Activated B cell treated with CpG ODN at 0.5 μM for 24 hours (primary cell): ENCODE measurements at regions of chr3 and their contacts with region 1.

Region 1: GRCh38 chr3:128680602-128681368 is 30.2 kb upstream of the RPN1 start:
- DNase-seq: peak; percentile 93
- ATAC-seq: peak; percentile 96
- H3K4me3 Mint-ChIP-seq: peak overlapping the region; percentile 92
- H3K27ac Mint-ChIP-seq: peak overlapping the region; percentile 94
- H3K4me1 Mint-ChIP-seq: peaks cover 34% of the 10 kb centered on the region
- H3K27me3 Mint-ChIP-seq: no peaks in the 10 kb centered on the region
- CTCF ChIP-seq: peak; percentile 62

Region 2: DNA sequence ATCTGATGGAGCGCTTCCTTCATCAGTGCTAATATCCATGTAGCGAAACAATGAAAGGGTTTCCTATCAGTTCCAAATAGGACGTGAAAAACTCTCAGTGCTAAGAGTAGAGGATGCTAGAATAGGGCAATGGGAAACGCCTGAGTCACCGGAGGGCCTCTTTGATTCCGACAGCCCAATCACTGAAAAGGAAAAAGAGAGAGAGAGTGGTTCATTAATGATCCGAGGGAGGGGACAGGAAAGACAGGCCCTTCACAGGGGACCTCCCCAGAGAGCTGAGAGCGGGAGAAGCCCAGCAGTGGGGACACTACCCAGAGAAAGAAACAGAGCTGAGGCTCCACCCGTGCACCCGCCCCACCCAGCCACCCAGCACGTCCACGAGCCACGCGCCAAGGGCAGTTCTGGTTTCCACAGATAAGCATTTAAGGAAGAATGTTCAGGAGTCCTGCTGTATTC is 107.0 kb before region 1 on chr3:
- CTCF ChIA-PET with region 1: no interaction called
- POLR2A ChIA-PET with region 1: no interaction called
- intact Hi-C with region 1: no loop called
- DNase-seq: no peak
- ATAC-seq: no peak
- H3K4me3 Mint-ChIP-seq: no peak overlapping the region
- H3K27ac Mint-ChIP-seq: no peak overlapping the region
- H3K4me1 Mint-ChIP-seq: no peaks in the 10 kb centered on the region
- H3K27me3 Mint-ChIP-seq: peaks cover 16% of the 10 kb centered on the region
- CTCF ChIP-seq: no peak

Region 3: GRCh38 chr3:128650096-128651050 is 30.4 kb before region 1 on chr3 and contains the start of gene RPN1:
- CTCF ChIA-PET with region 1: interaction called, 8 read pairs
- POLR2A ChIA-PET with region 1: interaction called, 62 read pairs
- intact Hi-C with region 1: loop called (anchors 1 kb)
- DNase-seq: peak; percentile 90
- ATAC-seq: peak; percentile 97
- H3K4me3 Mint-ChIP-seq: peak within 1 kb of the TSS; percentile 89
- H3K27ac Mint-ChIP-seq: peak within 1 kb of the TSS; percentile 86
- H3K4me1 Mint-ChIP-seq: peaks cover 41% of the 10 kb centered on the region
- H3K27me3 Mint-ChIP-seq: no peaks in the 10 kb centered on the region
- CTCF ChIP-seq: no peak
- total RNA-seq, gene RPN1: 93.4 and 95.2 TPM in 2 replicates

Region 4: GRCh38 chr3:128725932-128726690 is 45.3 kb after region 1 on chr3 and contains the start of gene RAB7A:
- CTCF ChIA-PET with region 1: interaction called, 21 read pairs
- POLR2A ChIA-PET with region 1: interaction called, 42 read pairs
- intact Hi-C with region 1: loop called (anchors 1 kb)
- DNase-seq: peak; percentile 93
- ATAC-seq: peak; percentile 94
- H3K4me3 Mint-ChIP-seq: peak within 1 kb of the TSS; percentile 93
- H3K27ac Mint-ChIP-seq: peak within 1 kb of the TSS; percentile 91
- H3K4me1 Mint-ChIP-seq: peaks cover 61% of the 10 kb centered on the region
- H3K27me3 Mint-ChIP-seq: peaks cover 7% of the 10 kb centered on the region
- CTCF ChIP-seq: no peak
- total RNA-seq, gene RAB7A: 169 and 190 TPM in 2 replicates

Region 5: DNA sequence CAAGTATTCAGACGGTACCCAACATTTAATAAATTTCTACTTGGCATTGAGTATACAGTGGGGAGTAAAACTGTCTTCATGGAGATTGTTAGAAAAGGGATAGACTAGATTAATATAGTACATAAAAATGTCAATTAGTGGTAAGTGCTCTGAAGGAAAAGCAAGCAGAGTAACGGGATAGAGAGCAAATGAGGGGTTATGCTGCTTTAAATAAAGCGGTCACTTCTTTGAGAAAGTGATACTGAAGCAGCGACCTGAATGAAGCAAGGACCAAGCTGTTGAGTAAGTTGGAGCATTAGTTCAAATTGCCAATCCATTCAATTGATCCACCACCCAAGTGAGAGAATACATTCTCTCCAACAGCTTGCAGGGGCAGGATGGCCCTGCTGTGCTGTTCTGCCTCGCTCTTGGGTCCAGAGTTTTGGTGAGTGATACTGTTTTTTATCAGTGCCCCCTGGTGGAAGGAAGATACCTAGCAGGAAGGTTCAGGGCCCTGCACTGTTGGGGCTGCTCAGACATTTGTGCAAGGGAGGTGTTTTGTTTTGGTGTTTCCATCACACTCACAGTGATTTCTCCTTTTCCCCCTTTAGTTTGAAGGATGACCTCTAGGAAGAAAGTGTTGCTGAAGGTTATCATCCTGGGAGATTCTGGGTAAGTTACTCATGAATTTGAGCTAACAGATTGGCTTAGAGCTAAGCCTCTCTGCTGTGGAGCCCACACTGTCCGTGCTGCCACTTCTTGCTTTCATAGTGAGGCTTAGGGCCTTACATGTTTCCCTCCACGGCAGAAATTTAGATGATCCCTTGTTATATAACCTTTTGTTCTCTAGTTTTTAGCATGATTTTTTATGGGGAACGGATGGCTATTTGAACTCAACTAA is 114.2 kb after region 1 on chr3:
- CTCF ChIA-PET with region 1: interaction called, 79 read pairs
- POLR2A ChIA-PET with region 1: interaction called, 17 read pairs
- intact Hi-C with region 1: loop called (anchors 1 kb)
- DNase-seq: no peak
- ATAC-seq: peak; percentile 100
- H3K4me3 Mint-ChIP-seq: no peak overlapping the region
- H3K27ac Mint-ChIP-seq: peak overlapping the region; percentile 30
- H3K4me1 Mint-ChIP-seq: peaks cover 50% of the 10 kb centered on the region
- H3K27me3 Mint-ChIP-seq: no peaks in the 10 kb centered on the region
- CTCF ChIP-seq: no peak

Region 6: GRCh38 chr3:128845778-128846485 is 165.1 kb after region 1 on chr3:
- CTCF ChIA-PET with region 1: interaction called, 15 read pairs
- POLR2A ChIA-PET with region 1: interaction called, 13 read pairs
- intact Hi-C with region 1: loop called (anchors 1 kb)
- DNase-seq: peak; percentile 72
- ATAC-seq: peak; percentile 87
- H3K4me3 Mint-ChIP-seq: peak overlapping the region; percentile 88
- H3K27ac Mint-ChIP-seq: peak overlapping the region; percentile 36
- H3K4me1 Mint-ChIP-seq: peaks cover 10% of the 10 kb centered on the region
- H3K27me3 Mint-ChIP-seq: no peaks in the 10 kb centered on the region
- CTCF ChIP-seq: no peak

Region 7: DNA sequence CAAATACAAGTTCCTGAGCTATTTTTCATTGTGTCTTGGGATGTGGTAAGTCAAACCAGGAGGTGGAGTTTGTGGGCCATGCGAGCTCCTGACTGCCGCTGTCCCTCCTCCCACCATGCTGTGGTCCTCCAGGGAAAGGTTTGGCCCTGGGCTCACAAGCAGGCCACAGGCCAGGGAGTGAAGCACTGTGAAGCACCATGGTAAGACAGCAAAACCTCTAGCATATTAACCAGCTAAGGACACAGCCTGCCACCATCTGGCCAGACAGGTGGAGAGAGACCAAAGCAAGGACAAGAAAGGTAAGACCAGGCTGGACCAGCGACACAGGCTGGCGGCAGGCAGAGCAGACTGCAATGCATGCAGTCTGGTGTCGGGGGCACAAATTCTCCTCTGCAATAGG is 425.5 kb after region 1 on chr3:
- CTCF ChIA-PET with region 1: no interaction called
- POLR2A ChIA-PET with region 1: no interaction called
- intact Hi-C with region 1: no loop called
- DNase-seq: no peak
- ATAC-seq: no peak
- H3K4me3 Mint-ChIP-seq: no peak overlapping the region
- H3K27ac Mint-ChIP-seq: no peak overlapping the region
- H3K4me1 Mint-ChIP-seq: no peaks in the 10 kb centered on the region
- H3K27me3 Mint-ChIP-seq: no peaks in the 10 kb centered on the region
- CTCF ChIP-seq: no peak